ENCODE measurements at regions of chr22 and their contacts with region 1.

Region 1: GRCh38 chr22:19909350-19910179 is 32.0 kb upstream of the COMT start:
- DNase-seq: peak in 1 of 2 donors; percentile 90
- H3K4me3 ChIP-seq: no peak overlapping the region
- H3K27ac ChIP-seq: no peak overlapping the region
- H3K4me1 ChIP-seq: no peaks in the 10 kb centered on the region
- H3K27me3 ChIP-seq: no peaks in the 10 kb centered on the region
- CTCF ChIP-seq: peak; percentile 86 to 87 (median 87)

Region 2: GRCh38 chr22:19730655-19731360 is 178.8 kb before region 1 on chr22:
- intact Hi-C with region 1: loop called (anchors 1 kb)
- DNase-seq: peak in 1 of 2 donors; percentile 85
- H3K4me3 ChIP-seq: peak overlapping the region; percentile 28 to 56
- H3K27ac ChIP-seq: no peak overlapping the region
- H3K4me1 ChIP-seq: peaks cover 0 to 6% of the 10 kb centered on the region in 2 donors
- H3K27me3 ChIP-seq: no peaks in the 10 kb centered on the region
- CTCF ChIP-seq: peak; percentile 93 to 98 (median 96)

Region 3: DNA sequence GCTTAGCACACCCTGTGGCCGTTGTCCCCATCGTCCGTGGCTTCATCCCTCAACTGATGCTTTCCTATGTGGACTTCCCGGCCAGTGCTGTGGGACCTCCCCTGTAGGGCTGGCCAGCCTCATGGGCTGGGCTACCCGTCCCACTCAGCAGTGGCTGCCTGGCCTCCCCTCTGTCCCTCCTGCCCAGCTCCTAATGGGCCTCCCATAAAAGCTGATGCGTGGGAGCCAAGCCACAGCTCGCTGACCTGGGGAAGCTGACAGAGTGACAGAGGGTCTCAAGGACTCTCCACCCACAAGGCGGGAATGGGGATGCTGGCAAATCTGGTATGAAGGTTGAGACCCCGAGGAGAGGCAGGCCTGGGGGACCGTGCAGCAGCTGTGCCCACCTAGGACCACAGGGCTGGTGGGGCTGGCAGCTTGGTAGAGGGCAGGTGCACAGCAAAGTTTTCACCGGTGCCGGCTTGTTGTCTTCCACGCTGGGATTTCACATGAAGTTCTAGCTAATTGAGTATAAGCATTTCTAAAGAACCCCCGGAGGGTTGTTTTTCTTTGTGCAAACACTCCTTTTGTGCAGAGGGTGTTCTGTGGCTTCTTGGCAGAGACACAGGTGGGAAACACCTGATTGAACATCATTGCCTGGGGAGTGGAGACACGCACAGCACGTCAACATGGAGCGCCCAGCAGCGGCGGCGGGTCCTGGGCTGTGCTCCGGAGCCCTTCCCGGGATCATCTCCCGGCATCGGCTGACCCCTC is 125.8 kb before region 1 on chr22:
- intact Hi-C with region 1: no loop called
- DNase-seq: no peak
- H3K4me3 ChIP-seq: no peak overlapping the region
- H3K27ac ChIP-seq: no peak overlapping the region
- H3K4me1 ChIP-seq: no peaks in the 10 kb centered on the region
- H3K27me3 ChIP-seq: no peaks in the 10 kb centered on the region
- CTCF ChIP-seq: no peak

Region 4: GRCh38 chr22:19948057-19948760 is 38.6 kb after region 1 on chr22:
- intact Hi-C with region 1: loop called (anchors 2 kb)
- DNase-seq: no peak
- H3K4me3 ChIP-seq: no peak overlapping the region
- H3K27ac ChIP-seq: peak overlapping the region; percentile 96 to 98
- H3K4me1 ChIP-seq: peaks cover 18 to 43% of the 10 kb centered on the region in 2 donors
- H3K27me3 ChIP-seq: no peaks in the 10 kb centered on the region
- CTCF ChIP-seq: no peak